ENCODE measurements at regions of chr7 and their contacts with region 1.

Region 1: DNA sequence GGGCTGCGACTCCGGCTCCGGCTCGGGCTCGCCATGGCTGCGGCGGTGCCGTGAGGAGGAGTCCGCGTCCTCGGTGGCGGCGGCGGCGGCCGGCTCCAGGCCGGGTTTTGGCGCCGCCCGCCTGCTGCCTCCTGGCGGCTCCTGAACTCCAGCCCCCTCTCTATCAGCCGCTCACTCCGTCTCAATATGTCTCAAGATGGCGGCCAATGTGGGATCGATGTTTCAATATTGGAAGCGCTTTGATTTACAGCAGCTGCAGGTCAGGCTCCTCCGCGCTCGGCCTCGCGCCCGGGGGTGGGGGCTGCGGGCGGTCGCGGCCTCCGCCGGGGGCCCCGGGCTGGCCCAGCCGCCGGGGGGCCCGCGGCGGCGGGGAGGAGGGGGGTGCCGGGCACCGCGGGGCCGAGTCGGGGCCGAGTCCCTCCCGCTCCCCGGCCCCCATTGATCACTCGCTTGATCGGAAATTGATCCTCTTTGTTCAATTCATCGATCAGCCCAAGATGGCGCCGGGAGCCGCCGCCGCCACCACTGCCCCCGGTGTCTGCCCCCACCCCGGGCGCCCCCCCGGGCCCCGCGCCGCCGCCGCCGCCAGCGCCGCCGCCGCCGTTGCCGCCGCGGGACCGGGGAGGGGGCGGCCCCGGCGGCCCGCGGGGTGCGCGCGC is 1.5 kb upstream of the CUX1 start:
- DNase-seq: peak; percentile 63
- H3K4me3 ChIP-seq: peak overlapping the region; percentile 32
- H3K27ac ChIP-seq: peak overlapping the region; percentile 36
- H3K4me1 ChIP-seq: no peaks in the 10 kb centered on the region
- H3K27me3 ChIP-seq: no peaks in the 10 kb centered on the region
- CTCF ChIP-seq: no peak

Region 2: DNA sequence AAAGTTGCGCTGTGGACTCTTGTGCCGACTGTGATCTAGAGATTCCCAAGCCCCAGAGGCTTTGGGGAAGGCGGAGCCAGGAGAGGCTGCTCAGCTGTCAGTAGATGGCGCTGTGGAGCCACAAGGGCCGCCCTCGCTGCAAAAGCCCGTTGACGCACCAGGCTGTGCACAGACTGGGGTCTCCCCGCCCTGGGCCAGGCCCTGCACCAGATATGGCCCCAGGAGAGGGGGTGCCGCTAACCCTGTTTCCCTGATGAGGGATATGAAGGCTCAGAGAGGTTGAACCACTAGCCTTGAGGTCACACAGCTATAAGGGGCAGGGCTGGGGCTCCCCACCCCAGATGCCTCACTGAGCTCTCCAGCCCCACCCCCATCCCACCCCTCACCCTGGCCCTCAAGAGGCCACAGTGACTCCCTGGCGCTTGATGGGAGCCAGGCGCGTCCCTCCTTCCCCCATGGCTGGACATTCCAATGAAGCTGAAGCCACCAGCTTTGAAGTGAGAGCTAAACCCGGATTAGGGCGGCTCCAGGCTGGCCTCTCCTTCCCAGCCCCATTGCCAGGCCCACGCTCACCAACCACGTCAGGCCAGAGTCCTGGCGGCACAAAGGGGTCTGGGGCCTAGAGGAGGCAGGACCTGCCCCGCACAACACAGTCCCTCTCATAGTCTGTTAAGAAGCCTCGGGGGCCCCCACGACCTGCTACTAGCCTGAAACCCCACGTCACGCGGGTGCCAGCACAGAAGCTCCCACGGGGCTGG is 213.3 kb before region 1 on chr7:
- intact Hi-C with region 1: loop called (anchors 10 kb)
- DNase-seq: peak; percentile 83
- H3K4me3 ChIP-seq: no peak overlapping the region
- H3K27ac ChIP-seq: no peak overlapping the region
- H3K4me1 ChIP-seq: no peaks in the 10 kb centered on the region
- H3K27me3 ChIP-seq: no peaks in the 10 kb centered on the region
- CTCF ChIP-seq: peak; percentile 84

Region 3: GRCh38 chr7:101688183-101688831 is 127.7 kb before region 1 on chr7:
- intact Hi-C with region 1: loop called (anchors 2 kb)
- DNase-seq: peak; percentile 87
- H3K4me3 ChIP-seq: peak overlapping the region; percentile 12
- H3K27ac ChIP-seq: no peak overlapping the region
- H3K4me1 ChIP-seq: no peaks in the 10 kb centered on the region
- H3K27me3 ChIP-seq: no peaks in the 10 kb centered on the region
- CTCF ChIP-seq: peak; percentile 96

Measured in colonic mucosa (tissue), 4 donors.